ENCODE measurements at regions of chr13 and their contacts with region 1.

Region 1: GRCh38 chr13:44141725-44142539 is 231.7 kb upstream of the SERP2 start:
- DNase-seq: peak; percentile 81 to 99 (median 88)
- ATAC-seq: peak; percentile 99
- H3K4me3 ChIP-seq: peak overlapping the region; percentile 89
- H3K4me3 Mint-ChIP-seq: peak overlapping the region; percentile 84 to 97 (median 92)
- H3K27ac ChIP-seq: peak overlapping the region; percentile 82
- H3K27ac Mint-ChIP-seq: peak overlapping the region; percentile 76 to 98 (median 95)
- H3K4me1 ChIP-seq: peaks cover 5% of the 10 kb centered on the region in 2 donors
- H3K4me1 Mint-ChIP-seq: peaks cover 6 to 23% (median 17%) of the 10 kb centered on the region in 7 donors
- H3K27me3 ChIP-seq: peaks cover 0 to 3% of the 10 kb centered on the region in 2 donors
- H3K27me3 Mint-ChIP-seq: peaks cover 0 to 51% (median 7%) of the 10 kb centered on the region in 5 donors

Region 2: DNA sequence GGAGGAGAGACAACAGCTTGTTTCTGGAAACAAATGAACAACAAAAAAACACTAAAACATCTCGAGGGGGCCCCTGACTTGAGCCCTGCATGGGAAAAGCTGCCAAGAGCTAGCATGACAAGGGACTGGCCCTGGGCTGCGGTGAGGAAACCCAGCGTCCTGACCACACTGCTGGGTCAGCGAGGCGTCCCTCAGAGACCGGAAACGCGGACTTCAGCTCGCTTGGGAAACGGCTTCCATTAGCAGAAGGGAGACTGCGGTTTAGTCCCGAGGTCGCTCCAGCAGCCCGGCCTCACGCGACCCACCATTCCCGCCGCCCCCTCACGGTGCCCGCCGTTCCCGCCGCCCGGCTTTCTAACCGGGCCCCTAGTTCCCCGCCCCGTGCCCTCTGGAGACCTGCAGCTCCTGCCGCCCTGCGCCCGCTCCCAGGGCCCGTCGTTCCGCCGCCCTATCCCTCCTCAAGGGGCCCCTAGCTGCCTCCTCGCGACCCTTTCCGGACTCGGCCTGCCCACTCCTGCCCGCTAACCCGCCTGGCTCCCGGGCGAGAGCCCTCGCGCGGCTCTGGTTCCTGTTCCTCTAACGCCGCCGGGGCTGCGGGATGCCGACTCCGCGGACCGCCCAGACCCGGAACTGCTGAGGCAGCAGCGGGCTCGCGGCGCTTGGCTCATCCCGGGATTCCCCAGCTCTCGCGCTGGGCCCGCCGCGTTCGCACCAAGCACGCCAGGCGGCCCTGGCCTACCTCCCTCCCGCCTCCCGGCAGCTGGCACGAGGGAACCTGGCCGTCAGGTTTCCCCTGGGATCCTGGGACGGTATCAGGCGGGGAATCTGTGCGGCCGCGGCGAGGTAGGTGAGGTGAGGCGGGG is 262.8 kb before region 1 on chr13 and contains the start of gene CCDC122:
- CTCF ChIA-PET with region 1: no interaction called
- POLR2A ChIA-PET with region 1: no interaction called
- intact Hi-C with region 1: loop called (anchors 2 to 10 kb)
- DNase-seq: peak; percentile 44 to 81 (median 65)
- ATAC-seq: peak; percentile 91
- H3K4me3 ChIP-seq: peak within 1 kb of the TSS; percentile 60
- H3K4me3 Mint-ChIP-seq: peak within 1 kb of the TSS; percentile 82 to 93 (median 90)
- H3K27ac ChIP-seq: peak within 1 kb of the TSS; percentile 72
- H3K27ac Mint-ChIP-seq: peak within 1 kb of the TSS; percentile 53 to 90 (median 81)
- H3K4me1 ChIP-seq: peaks cover 0 to 9% of the 10 kb centered on the region in 2 donors
- H3K4me1 Mint-ChIP-seq: peaks cover 15 to 27% (median 23%) of the 10 kb centered on the region in 7 donors
- H3K27me3 ChIP-seq: no peaks in the 10 kb centered on the region
- H3K27me3 Mint-ChIP-seq: peaks cover 0 to 33% (median 3%) of the 10 kb centered on the region in 5 donors
- total RNA-seq, gene CCDC122: 1.1 to 2.3 (median 1.4) TPM

Region 3: DNA sequence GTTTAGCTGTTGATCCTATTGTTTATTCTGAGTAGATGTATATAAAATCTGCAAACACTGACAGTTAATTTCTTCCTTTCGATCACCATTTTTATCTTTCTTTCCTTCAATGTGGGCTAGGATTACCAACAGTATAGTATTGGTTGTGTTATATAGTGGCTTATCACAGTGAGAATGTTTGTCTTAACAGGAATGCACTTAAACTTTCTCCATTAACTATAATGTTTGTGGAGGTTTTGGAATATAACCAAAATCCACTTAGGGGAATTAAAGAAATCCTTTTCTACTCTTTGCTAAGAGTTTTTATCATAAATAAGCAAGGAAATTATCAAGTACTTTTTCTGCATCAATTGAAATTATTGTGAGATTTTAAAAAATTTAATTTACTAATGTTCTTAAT is 17.6 kb before region 1 on chr13:
- CTCF ChIA-PET with region 1: no interaction called
- POLR2A ChIA-PET with region 1: no interaction called
- intact Hi-C with region 1: no loop called
- DNase-seq: no peak
- ATAC-seq: no peak
- H3K4me3 ChIP-seq: no peak overlapping the region
- H3K4me3 Mint-ChIP-seq: no peak overlapping the region
- H3K27ac ChIP-seq: no peak overlapping the region
- H3K27ac Mint-ChIP-seq: no peak overlapping the region
- H3K4me1 ChIP-seq: no peaks in the 10 kb centered on the region
- H3K4me1 Mint-ChIP-seq: no peaks in the 10 kb centered on the region
- H3K27me3 ChIP-seq: no peaks in the 10 kb centered on the region
- H3K27me3 Mint-ChIP-seq: peaks cover 0 to 6% (median 0%) of the 10 kb centered on the region in 5 donors

Region 4: DNA sequence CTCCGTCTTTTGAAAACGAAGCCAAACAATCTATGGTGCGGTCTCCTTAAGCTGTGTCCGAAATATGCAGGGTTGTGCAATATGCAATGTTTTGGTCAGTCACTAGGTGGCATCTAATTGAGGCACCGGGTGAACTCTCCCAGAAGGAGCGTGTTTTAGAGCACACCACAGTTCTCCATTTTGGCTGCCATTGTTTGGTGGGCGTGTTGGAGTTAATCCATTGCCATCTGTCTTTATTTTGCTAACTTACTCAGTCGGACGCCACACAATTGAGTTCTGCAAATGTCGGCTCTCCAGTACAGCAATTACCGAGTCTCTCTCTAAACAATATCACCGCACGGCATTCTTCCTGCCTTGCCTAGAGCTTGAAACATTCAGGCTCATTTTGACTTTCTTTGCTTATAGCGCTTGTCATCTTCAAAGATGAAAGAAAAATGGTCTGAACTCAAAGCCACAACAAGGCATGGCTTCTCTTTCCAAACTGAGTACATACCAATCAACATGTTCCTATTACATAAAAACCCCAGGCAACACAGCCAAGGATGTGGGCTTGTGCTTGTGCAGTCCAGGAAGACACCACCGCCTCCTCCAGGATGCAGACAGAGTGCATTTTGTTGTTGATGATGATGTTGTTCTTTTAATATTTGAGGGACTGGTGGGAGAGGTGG is 49.7 kb after region 1 on chr13:
- CTCF ChIA-PET with region 1: no interaction called
- POLR2A ChIA-PET with region 1: interaction called, 5 read pairs
- intact Hi-C with region 1: loop called in 1 of 2 experiments (anchors 1 kb)
- DNase-seq: peak in 7 of 9 donors; percentile 63 to 81 (median 72)
- ATAC-seq: peak; percentile 88
- H3K4me3 ChIP-seq: peak overlapping the region; percentile 0
- H3K4me3 Mint-ChIP-seq: peak overlapping the region; percentile 6 to 71 (median 59)
- H3K27ac ChIP-seq: no peak overlapping the region
- H3K27ac Mint-ChIP-seq: peak overlapping the region in 8 of 9 donors; percentile 75 to 97 (median 86)
- H3K4me1 ChIP-seq: peaks cover 0 to 6% of the 10 kb centered on the region in 2 donors
- H3K4me1 Mint-ChIP-seq: peaks cover 16 to 39% (median 35%) of the 10 kb centered on the region in 7 donors
- H3K27me3 ChIP-seq: no peaks in the 10 kb centered on the region
- H3K27me3 Mint-ChIP-seq: peaks cover 0 to 44% (median 0%) of the 10 kb centered on the region in 5 donors

Region 5: DNA sequence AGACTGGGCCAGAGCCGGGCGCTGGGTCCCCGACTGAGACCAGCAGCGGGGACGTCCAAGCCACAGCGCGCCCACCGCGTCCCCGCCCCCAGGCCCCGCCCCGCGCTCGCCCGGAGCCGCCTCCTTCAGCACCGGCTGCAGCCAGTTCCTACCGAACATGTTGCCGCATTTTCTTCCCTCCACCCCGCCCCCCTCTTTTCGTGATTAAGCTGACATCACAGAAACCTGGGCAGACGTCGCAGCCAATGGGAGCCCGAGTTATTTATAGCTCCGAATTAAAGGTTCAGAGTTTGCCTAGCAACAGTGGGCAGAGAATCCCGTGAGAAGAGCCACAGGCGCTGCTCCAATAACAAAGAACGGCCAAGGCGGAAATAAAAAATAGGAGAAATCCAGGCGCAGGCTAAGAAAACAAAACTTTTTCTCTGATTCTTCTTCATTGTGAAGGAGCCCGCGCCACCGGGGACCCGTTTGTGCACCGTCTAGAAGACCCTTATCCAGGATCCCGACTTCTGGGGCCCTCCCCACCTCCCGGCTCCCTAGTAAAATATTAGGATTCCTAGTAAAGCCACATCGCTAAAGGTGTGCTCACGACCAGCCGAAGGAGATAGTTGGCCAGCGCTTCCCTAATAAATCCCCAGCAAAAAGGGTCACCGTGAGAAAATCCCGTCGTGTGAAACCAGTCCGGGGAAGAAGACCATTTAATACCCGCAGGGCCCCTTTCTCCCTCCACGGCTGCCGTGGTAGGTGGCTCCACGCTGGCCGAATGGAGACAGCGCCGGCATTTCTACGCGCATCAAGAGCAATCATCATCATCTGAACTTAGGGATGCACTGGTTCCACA is 293.4 kb after region 1 on chr13:
- CTCF ChIA-PET with region 1: no interaction called
- POLR2A ChIA-PET with region 1: no interaction called
- intact Hi-C with region 1: loop called (anchors 1 to 2 kb)
- DNase-seq: peak; percentile 58 to 94 (median 78)
- ATAC-seq: peak; percentile 91
- H3K4me3 ChIP-seq: peak overlapping the region; percentile 65
- H3K4me3 Mint-ChIP-seq: peak overlapping the region; percentile 85 to 94 (median 90)
- H3K27ac ChIP-seq: peak overlapping the region; percentile 75
- H3K27ac Mint-ChIP-seq: peak overlapping the region; percentile 21 to 93 (median 83)
- H3K4me1 ChIP-seq: peaks cover 13 to 14% of the 10 kb centered on the region in 2 donors
- H3K4me1 Mint-ChIP-seq: peaks cover 14 to 34% (median 27%) of the 10 kb centered on the region in 7 donors
- H3K27me3 ChIP-seq: peaks cover 0 to 3% of the 10 kb centered on the region in 2 donors
- H3K27me3 Mint-ChIP-seq: peaks cover 6 to 73% (median 9%) of the 10 kb centered on the region in 5 donors

Region 6: GRCh38 chr13:44988973-44989817 is 847.3 kb after region 1 on chr13 and contains the starts of genes GPALPP1 and NUFIP1:
- CTCF ChIA-PET with region 1: no interaction called
- POLR2A ChIA-PET with region 1: no interaction called
- intact Hi-C with region 1: loop called in 1 of 2 experiments (anchors 1 kb)
- DNase-seq: peak; percentile 79 to 94 (median 90)
- ATAC-seq: peak; percentile 98
- H3K4me3 ChIP-seq: peak within 1 kb of the TSS; percentile 94
- H3K4me3 Mint-ChIP-seq: peak within 1 kb of the TSS; percentile 96 to 100 (median 98)
- H3K27ac ChIP-seq: peak within 1 kb of the TSS; percentile 95
- H3K27ac Mint-ChIP-seq: peak within 1 kb of the TSS; percentile 91 to 99 (median 98)
- H3K4me1 ChIP-seq: peaks cover 18 to 27% of the 10 kb centered on the region in 2 donors
- H3K4me1 Mint-ChIP-seq: peaks cover 42 to 81% (median 68%) of the 10 kb centered on the region in 7 donors
- H3K27me3 ChIP-seq: no peaks in the 10 kb centered on the region
- H3K27me3 Mint-ChIP-seq: no peaks in the 10 kb centered on the region
- total RNA-seq, gene GPALPP1: 29.7 to 43.1 (median 33.0) TPM
- total RNA-seq, gene NUFIP1: 3.7 to 6.6 (median 5.4) TPM

Region 7: GRCh38 chr13:45119991-45120864 is 978.3 kb after region 1 on chr13 and contains the start of gene GTF2F2:
- CTCF ChIA-PET with region 1: no interaction called
- POLR2A ChIA-PET with region 1: no interaction called
- intact Hi-C with region 1: loop called in 1 of 2 experiments (anchors 5 kb)
- DNase-seq: peak; percentile 81 to 89 (median 86)
- ATAC-seq: peak; percentile 80
- H3K4me3 ChIP-seq: peak within 1 kb of the TSS; percentile 80
- H3K4me3 Mint-ChIP-seq: no peak within 1 kb of the TSS
- H3K27ac ChIP-seq: peak within 1 kb of the TSS; percentile 91
- H3K27ac Mint-ChIP-seq: no peak within 1 kb of the TSS
- H3K4me1 ChIP-seq: peaks cover 16 to 21% of the 10 kb centered on the region in 2 donors
- H3K4me1 Mint-ChIP-seq: peaks cover 6 to 17% (median 13%) of the 10 kb centered on the region in 7 donors
- H3K27me3 ChIP-seq: no peaks in the 10 kb centered on the region
- H3K27me3 Mint-ChIP-seq: no peaks in the 10 kb centered on the region
- total RNA-seq, gene GTF2F2: 13.7 to 20.4 (median 15.2) TPM

Measured in naive thymus-derived CD4-positive, alpha-beta T cell (primary cell).